GM23248 (cell line): ENCODE measurements at regions of chr2 and their contacts with region 1.

Region 1: GRCh38 chr2:39913648-39914461 is 134.8 kb upstream of the THUMPD2 start:
- DNase-seq: peak; percentile 85
- H3K4me3 ChIP-seq: no peak overlapping the region
- H3K27ac ChIP-seq: no peak overlapping the region
- H3K4me1 ChIP-seq: peaks cover 8% of the 10 kb centered on the region
- H3K27me3 ChIP-seq: no peaks in the 10 kb centered on the region

Region 2: DNA sequence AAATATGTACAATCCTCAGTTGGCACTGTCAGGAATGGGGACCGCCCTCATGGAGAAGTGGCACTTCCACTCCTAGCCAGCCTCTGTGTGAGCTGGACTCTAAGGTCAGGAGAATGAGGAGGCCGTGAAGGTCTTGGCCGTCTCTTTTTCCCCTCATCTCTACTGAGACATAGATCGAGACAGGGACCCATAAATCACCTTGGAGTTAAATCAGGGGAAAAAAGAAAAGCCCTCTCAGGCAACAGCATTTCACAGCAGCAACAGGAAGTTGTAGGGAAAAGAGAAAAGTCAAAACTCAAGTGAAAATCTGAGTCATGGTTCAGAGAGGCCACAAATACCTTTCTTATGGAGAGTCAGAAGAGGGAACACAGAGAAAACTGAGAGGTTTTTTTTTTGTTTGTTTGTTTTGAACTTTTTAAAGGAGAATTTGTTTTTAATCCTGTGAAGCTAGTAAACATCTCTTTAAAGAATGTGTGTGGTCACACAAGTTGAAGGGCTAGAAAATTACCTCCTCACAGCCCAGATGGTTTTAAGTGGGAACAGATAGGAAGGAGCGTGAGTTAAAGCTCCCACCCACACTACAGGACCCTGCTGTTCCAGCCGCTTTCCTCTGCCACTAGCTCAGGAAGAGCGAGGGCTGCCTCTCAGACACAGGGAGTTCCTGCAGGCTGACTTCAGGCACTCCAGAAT is 1807.3 kb before region 1 on chr2:
- in situ Hi-C with region 1: no loop called
- DNase-seq: peak; percentile 82
- H3K4me3 ChIP-seq: peak overlapping the region; percentile 11
- H3K27ac ChIP-seq: peak overlapping the region; percentile 83
- H3K4me1 ChIP-seq: peaks cover 27% of the 10 kb centered on the region
- H3K27me3 ChIP-seq: no peaks in the 10 kb centered on the region

Region 3: DNA sequence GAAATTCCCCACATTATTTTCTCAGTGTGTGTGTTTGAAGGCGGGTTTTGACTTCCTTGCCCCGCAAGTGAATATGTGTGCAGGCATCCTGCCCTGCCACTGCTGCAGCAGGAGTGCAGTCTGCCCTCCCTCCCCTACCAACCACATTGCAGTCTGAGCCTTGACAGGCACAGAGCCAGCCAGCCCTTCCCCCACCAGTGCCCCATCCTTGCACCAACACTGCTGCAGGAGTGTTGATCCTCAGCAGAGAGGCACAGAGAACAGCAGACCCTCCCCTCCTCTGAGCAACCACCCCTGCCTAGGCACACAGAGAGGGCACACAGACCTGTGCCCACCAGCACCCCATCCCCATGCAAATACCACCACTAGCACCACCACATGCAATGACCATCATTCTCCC is 1451.0 kb after region 1 on chr2:
- in situ Hi-C with region 1: loop called (anchors 25 kb)
- DNase-seq: no peak
- H3K4me3 ChIP-seq: no peak overlapping the region
- H3K27ac ChIP-seq: no peak overlapping the region
- H3K4me1 ChIP-seq: no peaks in the 10 kb centered on the region
- H3K27me3 ChIP-seq: no peaks in the 10 kb centered on the region

Region 4: DNA sequence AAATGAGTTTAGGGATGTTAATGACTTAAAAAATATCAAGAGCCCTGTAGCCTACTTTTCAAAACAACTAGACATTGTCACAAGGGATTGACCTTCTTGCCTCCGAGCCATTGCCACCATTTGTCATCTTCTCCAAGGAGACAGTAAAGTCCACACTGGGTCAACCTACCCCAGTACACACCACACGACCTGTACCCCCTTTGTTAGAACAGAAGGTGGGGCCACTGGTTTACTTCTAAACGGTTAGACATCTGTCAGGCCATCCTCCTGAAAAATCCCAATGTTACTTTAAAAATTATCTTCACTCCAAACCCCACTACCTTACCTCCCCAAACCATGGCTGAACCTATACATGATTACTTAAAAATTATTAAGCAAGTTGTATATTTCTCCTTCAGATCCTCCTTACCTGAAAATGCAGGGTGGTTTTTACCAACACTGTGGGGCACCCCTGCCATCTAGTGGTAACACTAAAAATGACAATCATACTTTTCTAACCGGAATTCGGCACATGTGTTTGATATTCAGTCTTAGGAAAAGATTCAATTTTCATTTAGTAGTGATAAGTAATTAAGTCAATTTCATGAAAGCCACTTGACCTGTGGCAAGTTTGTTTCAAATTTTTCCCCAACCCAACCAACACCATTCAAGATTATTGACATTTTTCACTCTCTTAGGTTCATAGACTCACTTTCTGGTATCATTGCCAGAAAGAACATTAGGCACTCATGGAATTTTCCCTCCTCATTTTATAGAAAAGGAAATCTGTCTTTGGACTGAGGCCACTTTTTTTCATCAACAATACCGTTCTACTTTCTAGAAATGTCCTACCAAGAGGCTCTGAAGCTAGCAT is 1868.7 kb after region 1 on chr2:
- in situ Hi-C with region 1: loop called (anchors 25 kb)
- DNase-seq: peak; percentile 52
- H3K4me3 ChIP-seq: no peak overlapping the region
- H3K27ac ChIP-seq: no peak overlapping the region
- H3K4me1 ChIP-seq: no peaks in the 10 kb centered on the region
- H3K27me3 ChIP-seq: 0 out of 2 replicates have a peak, but pooled peaks cover 7% of the 10 kb centered on the region